GM12878 (cell line): ENCODE measurements at regions of chr16 and their contacts with region 1.

Region 1: GRCh38 chr16:31382485-31383161 is 10.5 kb upstream of the ITGAD start:
- DNase-seq: no peak
- ATAC-seq: peak; percentile 89
- H3K4me3 ChIP-seq: no peak overlapping the region
- H3K27ac ChIP-seq: no peak overlapping the region
- H3K4me1 ChIP-seq: no peaks in the 10 kb centered on the region
- H3K27me3 ChIP-seq: peaks cover 0 to 3% of the 10 kb centered on the region in 2 experiments; a peak in 1 of 4 replicates
- CTCF ChIP-seq: peak; percentile 78 to 92 (median 87)
- EP300 ChIP-seq: no peak
- POLR2A ChIP-seq: no peak
- RAD21 ChIP-seq: peak; percentile 82

Region 2: DNA sequence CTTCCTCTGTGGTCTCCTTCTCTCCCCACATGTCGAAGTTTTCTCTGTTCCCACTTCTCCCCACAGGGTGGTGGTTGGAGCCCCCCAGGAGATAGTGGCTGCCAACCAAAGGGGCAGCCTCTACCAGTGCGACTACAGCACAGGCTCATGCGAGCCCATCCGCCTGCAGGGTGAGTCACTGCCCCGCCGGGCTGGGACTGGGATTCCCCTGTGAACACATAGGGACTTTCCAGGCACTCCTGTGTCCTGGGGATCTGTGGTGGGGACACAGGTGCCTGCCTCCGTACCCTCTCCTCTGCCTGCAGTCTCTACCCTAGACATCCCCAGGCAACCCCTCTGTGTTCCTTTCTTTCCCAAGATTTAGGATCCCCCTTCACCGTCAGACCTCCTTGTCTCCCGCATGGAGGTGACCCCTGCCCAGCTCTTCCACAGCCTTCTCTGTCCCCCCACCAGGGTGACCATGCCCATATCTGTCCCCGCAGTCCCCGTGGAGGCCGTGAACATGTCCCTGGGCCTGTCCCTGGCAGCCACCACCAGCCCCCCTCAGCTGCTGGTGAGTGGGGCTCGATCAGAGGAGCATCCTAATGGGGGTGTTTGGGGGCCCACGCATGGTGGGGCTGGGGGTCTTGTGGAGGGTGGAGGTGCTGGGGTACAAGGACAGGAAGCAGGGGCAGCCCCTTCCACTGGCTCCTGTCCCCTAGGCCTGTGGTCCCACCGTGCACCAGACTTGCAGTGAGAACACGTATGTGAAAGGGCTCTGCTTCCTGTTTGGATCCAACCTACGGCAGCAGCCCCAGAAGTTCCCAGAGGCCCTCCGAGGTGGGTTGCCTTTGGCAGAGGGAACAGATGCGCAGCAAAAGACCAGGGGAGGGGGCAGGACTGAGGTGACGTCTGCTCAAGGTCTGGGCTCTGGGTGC is 117.0 kb before region 1 on chr16:
- CTCF ChIA-PET with region 1: interaction called, 11 read pairs
- POLR2A ChIA-PET with region 1: no interaction called
- RAD21 ChIA-PET with region 1: interaction called, 3 read pairs
- SMC1A ChIA-PET with region 1: interaction called, 4 read pairs
- in situ Hi-C with region 1: no loop called
- intact Hi-C with region 1: no loop called
- DNase-seq: peak; percentile 79
- ATAC-seq: peak; percentile 95
- H3K4me3 ChIP-seq: peak overlapping the region; percentile 32; the same call in 1 of the 2 replicates
- H3K27ac ChIP-seq: peak overlapping the region; percentile 88
- H3K4me1 ChIP-seq: peaks cover 32% of the 10 kb centered on the region
- H3K27me3 ChIP-seq: no peaks in the 10 kb centered on the region
- CTCF ChIP-seq: peak; percentile 20 to 21 (median 21); a peak in 2 of 6 replicates
- EP300 ChIP-seq: peak in 1 of 2 experiments; percentile 51; a peak in 1 of 4 replicates
- POLR2A ChIP-seq: no peak; the same call in 1 of the 2 replicates
- RAD21 ChIP-seq: peak; percentile 25; the same call in 1 of the 2 replicates

Region 3: DNA sequence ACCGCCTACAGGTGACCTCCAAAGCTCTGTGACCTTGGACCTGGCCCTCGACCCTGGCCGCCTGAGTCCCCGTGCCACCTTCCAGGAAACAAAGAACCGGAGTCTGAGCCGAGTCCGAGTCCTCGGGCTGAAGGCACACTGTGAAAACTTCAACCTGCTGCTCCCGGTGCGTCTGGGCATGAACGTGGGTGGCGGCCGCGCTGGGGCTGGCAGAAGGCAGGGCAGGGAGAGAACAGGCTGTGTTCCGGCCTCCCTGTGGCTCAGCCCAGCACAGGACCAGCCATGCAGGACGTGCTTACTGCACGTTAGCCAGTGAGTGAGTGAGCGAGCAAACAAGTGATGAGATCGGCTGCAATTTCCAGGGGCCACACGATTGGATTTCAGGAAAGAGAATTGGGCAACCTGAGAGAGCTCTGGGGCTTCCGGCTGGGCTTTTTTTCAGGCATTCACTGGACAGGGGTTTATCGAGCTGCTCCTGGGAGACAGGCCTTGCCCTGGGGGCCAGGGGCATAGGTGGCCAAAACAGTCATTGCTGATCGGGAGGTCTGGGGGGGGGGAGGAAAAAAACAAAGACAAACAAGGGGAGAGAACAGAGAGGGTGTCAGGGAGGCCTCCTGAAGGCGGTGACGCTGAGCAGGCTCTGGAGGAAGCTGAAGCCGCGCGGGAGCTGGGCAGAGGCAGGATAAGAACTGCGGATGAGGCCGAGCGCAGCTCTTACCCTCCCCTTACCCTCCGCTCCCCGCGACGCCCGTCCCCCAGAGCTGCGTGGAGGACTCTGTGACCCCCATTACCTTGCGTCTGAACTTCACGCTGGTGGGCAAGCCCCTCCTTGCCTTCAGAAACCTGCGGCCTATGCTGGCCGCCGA is 10.8 kb before region 1 on chr16:
- CTCF ChIA-PET with region 1: interaction called, 12 read pairs
- POLR2A ChIA-PET with region 1: interaction called, 4 read pairs
- RAD21 ChIA-PET with region 1: interaction called, 3 read pairs
- SMC1A ChIA-PET with region 1: interaction called, 3 read pairs
- in situ Hi-C with region 1: no loop called
- intact Hi-C with region 1: no loop called
- DNase-seq: no peak
- ATAC-seq: no peak
- H3K4me3 ChIP-seq: no peak overlapping the region
- H3K27ac ChIP-seq: no peak overlapping the region
- H3K4me1 ChIP-seq: peaks cover 2% of the 10 kb centered on the region; the same call in 1 of the 2 replicates
- H3K27me3 ChIP-seq: no peaks in the 10 kb centered on the region
- CTCF ChIP-seq: no peak
- EP300 ChIP-seq: no peak
- POLR2A ChIP-seq: no peak
- RAD21 ChIP-seq: no peak

Region 4: DNA sequence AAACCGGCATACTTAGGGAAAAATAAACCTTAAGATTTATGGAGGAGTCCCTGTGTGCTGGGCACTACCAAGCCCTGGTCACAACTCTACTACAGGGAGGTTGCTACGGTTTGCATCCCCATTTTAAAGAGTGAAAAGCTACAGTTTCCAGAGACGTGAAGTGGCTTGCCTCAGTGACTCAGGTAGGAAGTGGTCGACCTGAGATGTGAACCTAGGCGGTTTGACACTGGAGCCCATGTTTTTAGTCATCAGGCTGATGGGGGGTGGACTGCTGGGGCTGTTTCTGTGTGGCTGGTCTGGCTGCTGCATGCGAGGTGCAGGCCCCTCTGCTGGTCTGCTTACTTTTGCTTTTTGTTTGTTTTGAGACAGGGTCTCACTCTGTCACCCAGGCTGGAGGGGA is 39.0 kb after region 1 on chr16:
- CTCF ChIA-PET with region 1: interaction called, 6 read pairs
- POLR2A ChIA-PET with region 1: no interaction called
- RAD21 ChIA-PET with region 1: interaction called, 4 read pairs
- SMC1A ChIA-PET with region 1: interaction called, 10 read pairs
- in situ Hi-C with region 1: no loop called
- intact Hi-C with region 1: no loop called
- DNase-seq: peak; percentile 34
- ATAC-seq: peak; percentile 91
- H3K4me3 ChIP-seq: no peak overlapping the region
- H3K27ac ChIP-seq: no peak overlapping the region
- H3K4me1 ChIP-seq: peaks cover 18% of the 10 kb centered on the region
- H3K27me3 ChIP-seq: no peaks in the 10 kb centered on the region
- CTCF ChIP-seq: no peak
- EP300 ChIP-seq: peak; percentile 61 to 76; a peak in 3 of 4 replicates
- POLR2A ChIP-seq: no peak
- RAD21 ChIP-seq: no peak

Region 5: GRCh38 chr16:31440516-31441184 is 58.0 kb after region 1 on chr16:
- CTCF ChIA-PET with region 1: interaction called, 45 read pairs
- POLR2A ChIA-PET with region 1: interaction called, 4 read pairs
- RAD21 ChIA-PET with region 1: interaction called, 17 read pairs
- SMC1A ChIA-PET with region 1: interaction called, 20 read pairs
- in situ Hi-C with region 1: no loop called
- intact Hi-C with region 1: loop called (anchors 2 kb)
- DNase-seq: no peak
- ATAC-seq: no peak
- H3K4me3 ChIP-seq: no peak overlapping the region
- H3K27ac ChIP-seq: no peak overlapping the region
- H3K4me1 ChIP-seq: no peaks in the 10 kb centered on the region
- H3K27me3 ChIP-seq: no peaks in the 10 kb centered on the region
- CTCF ChIP-seq: no peak
- EP300 ChIP-seq: no peak
- POLR2A ChIP-seq: no peak
- RAD21 ChIP-seq: no peak